Right ventricle myocardium superior (tissue), 1 donor: ENCODE measurements at regions of chr3 and their contacts with region 1.

Region 1: DNA sequence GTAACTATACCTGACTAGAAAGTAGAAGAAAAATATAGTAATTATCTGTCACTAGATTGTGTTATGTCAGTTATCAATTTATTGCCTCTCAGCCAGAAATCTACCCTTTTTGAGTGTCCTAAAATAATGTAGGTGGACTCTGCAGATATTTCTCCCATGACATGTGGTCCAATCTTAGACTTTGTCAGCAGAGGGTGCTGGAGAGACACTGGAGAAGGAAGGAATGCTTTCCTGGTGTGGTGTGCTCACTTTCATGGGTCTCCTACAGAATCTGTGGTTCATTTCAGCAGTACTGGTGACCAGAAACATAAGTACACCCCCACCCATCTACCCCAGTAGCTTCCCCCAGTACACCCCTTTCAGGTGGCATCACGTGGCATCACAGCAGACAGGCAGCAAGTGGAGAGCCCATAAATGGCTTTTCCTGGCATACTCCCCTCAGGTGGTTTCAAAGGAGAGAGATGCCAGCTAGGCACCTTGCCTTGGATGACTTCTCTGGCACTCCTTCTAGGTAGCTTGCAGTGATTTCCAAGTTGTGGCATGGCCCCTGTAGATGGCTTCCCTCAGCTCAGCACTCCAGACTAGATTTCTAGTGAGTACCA is 114.7 kb downstream of the GADL1 start:
- DNase-seq: no peak
- ATAC-seq: no peak

Region 2: DNA sequence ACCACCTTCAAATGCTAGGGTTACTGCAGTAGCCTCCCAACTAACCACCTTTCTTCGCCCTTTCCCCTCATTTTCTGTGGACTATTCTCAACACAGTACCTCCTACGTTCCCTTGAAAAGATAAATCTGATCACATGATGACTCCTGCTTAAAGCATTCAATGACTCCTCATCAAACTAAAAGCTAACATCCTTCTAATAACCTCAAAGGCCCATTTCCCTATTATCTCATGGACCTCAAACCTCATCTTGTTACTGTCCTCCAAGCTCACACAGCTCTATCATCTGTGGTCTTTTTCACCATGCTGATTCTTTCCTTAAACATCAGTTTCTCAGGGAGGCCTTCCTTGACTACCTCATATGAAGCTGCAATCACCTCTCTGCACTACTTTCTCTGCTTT is 85.0 kb after region 1 on chr3:
- intact Hi-C with region 1: no loop called
- DNase-seq: no peak
- ATAC-seq: no peak

Region 3: GRCh38 chr3:30894538-30895251 is 114.9 kb after region 1 on chr3 and contains the start of gene GADL1:
- intact Hi-C with region 1: loop called (anchors 10 kb)
- DNase-seq: peak; percentile 50
- ATAC-seq: peak; percentile 72
- total RNA-seq, gene GADL1: not detected